ENCODE measurements at regions of chr11 and their contacts with region 1.

Region 1: GRCh38 chr11:94504689-94505293 is 7.5 kb upstream of the C11orf97 start:
- DNase-seq: no peak
- ATAC-seq: peak; percentile 86
- H3K4me3 ChIP-seq: no peak overlapping the region
- H3K27ac ChIP-seq: no peak overlapping the region
- H3K4me1 ChIP-seq: no peaks in the 10 kb centered on the region
- H3K27me3 ChIP-seq: no peaks in the 10 kb centered on the region
- CTCF ChIP-seq: peak; percentile 77; the same call in 1 of the 2 replicates

Region 2: DNA sequence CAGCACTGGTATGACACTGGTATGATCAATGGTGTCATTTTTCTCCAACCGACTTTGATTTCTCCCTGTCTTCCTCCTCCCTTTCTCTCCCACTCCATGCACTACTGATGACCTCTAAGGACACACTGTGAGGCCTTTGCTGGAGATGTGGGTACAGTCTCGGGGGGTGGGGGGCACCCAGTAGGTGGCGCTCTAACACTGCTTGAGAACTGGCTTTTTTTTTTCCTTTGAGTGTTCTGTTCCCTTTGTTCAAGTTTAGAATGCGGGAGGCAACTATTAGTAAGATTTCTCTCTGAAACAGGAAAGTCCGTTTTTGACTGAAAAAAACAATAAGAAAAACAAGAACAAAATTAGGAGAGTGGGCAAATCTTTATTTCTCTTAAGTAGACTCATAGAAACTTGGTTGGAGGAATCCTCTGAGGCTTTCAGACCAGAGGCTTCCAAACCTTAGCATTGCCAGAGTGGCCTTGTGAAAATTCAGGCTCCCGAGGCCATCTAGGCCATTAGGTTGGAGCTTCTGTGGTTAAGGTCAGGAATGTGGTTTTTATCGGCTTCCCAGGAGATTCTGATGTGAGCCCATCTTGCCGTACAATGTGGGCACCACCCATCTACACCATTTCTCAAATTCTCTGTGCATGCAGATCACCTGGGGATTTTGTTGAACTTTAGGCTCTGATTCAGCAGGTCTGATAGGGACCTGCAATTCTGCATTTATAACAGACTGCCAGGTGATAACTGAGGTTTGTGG is 332.9 kb before region 1 on chr11:
- CTCF ChIA-PET with region 1: no interaction called
- POLR2A ChIA-PET with region 1: no interaction called
- in situ Hi-C with region 1: no loop called
- intact Hi-C with region 1: loop called (anchors 5 kb)
- DNase-seq: peak; percentile 8
- ATAC-seq: peak; percentile 78
- H3K4me3 ChIP-seq: no peak overlapping the region
- H3K27ac ChIP-seq: no peak overlapping the region
- H3K4me1 ChIP-seq: no peaks in the 10 kb centered on the region
- H3K27me3 ChIP-seq: no peaks in the 10 kb centered on the region
- CTCF ChIP-seq: peak; percentile 95

Region 3: DNA sequence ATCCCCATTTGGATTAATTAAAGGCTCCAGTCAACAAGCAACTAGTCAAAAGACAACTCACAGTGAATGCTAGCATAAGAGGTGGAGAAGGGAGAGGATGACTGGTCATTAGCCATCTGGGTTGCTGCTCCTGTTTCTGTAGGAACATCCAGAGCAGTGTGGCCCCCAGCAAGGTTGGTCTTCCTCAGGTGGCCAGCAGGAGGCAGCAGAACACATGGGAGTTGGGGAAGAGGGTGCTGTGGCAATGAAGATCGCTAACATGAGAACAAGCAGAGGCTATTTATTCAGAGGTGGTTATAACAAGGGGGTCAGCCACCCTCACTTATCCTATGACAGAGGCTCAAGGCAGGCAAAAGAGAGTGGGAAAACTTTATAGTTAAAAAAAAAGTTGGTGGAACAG is 179.1 kb before region 1 on chr11:
- CTCF ChIA-PET with region 1: no interaction called
- POLR2A ChIA-PET with region 1: no interaction called
- in situ Hi-C with region 1: no loop called
- intact Hi-C with region 1: loop called (anchors 5 kb)
- DNase-seq: peak; percentile 28
- ATAC-seq: peak; percentile 73; the same call in 1 of the 2 replicates
- H3K4me3 ChIP-seq: no peak overlapping the region
- H3K27ac ChIP-seq: no peak overlapping the region
- H3K4me1 ChIP-seq: peaks cover 4% of the 10 kb centered on the region; the same call in 1 of the 2 replicates
- H3K27me3 ChIP-seq: no peaks in the 10 kb centered on the region; the same call in none of the 2 replicates
- CTCF ChIP-seq: peak; percentile 67

Region 4: DNA sequence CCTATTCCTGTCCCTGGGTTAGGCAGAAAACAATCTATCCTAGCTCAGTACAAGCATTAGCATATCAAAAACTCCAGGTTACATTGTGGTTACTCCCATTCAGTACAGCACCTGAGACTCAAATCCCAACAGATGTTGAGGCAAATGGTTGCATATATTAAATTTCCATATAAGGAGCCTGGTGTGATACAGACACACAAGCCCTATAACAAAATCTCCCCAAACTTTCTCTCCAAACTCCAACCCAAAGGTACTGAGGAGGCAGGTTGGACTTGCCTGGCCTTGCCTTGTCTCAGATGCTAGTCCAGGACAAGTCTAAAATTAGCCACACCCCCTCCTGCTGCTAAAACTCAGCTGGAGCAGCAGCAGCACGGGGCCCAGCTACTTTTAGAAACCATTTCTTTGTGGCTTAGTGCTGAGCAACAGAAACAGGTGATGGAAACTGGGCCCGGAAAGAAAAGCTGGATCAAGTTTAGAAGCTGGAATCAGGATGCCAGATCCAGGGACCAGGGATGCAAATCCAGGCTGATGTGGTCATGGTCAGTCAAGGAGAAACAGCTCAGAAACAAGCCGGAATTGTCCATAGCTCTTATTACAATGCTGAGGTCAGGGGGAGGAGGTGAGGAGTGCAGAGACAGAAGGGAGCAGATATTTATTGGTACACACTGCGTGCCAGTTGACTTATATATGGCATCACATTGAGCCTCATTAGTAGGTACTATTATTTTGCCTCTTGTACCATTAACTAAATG is 189.7 kb after region 1 on chr11:
- CTCF ChIA-PET with region 1: no interaction called
- POLR2A ChIA-PET with region 1: no interaction called
- in situ Hi-C with region 1: no loop called
- intact Hi-C with region 1: no loop called
- DNase-seq: no peak
- ATAC-seq: no peak
- H3K4me3 ChIP-seq: no peak overlapping the region
- H3K27ac ChIP-seq: no peak overlapping the region
- H3K4me1 ChIP-seq: no peaks in the 10 kb centered on the region
- H3K27me3 ChIP-seq: peaks cover 5% of the 10 kb centered on the region; the same call in 1 of the 2 replicates
- CTCF ChIP-seq: no peak